ENCODE measurements at regions of chr1 and their contacts with region 1.

Region 1: GRCh38 chr1:107782217-107782845 is 182.6 kb downstream of the VAV3 start:
- DNase-seq: peak; percentile 75
- H3K4me3 ChIP-seq: no peak overlapping the region
- H3K27ac ChIP-seq: no peak overlapping the region
- H3K4me1 ChIP-seq: peaks cover 36% of the 10 kb centered on the region
- CTCF ChIP-seq: peak; percentile 98

Region 2: DNA sequence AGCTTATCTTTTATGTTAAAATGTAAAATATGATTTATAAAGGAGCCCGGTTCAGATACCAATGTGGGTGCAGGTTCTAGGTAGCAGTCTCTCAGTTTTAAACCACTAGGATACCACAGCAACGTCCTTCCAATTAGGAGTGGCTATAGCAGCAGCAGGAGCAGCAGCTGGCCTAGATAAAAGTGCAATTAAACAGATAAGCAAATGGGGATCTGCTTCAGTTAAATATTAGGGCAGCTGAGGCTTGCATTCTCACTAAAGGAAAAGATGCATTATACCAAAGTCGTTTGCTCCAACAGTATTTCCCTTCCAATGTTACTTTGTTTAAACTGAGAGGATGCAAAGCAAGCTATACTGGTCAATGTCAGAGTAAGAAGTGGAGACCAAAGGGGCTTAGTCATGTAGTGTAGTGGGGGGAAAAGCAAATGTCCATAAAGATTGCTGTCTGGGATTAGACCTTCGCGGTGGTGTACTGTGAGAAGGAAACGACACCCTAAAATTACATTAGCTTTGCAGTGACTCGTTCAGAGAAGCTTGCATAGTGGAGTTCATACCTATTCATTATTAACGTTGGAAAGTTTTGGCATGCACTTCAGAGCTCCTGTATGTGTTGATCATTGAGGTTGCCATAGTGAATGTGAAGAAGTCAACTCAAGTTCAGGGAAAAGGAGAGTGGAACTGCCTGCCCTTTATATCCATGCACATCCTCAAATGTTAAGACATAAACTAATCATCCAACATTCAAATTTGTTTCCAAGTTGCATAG is 89.6 kb before region 1 on chr1:
- CTCF ChIA-PET with region 1: no interaction called
- POLR2A ChIA-PET with region 1: no interaction called
- intact Hi-C with region 1: no loop called
- DNase-seq: no peak
- H3K4me3 ChIP-seq: no peak overlapping the region
- H3K27ac ChIP-seq: no peak overlapping the region
- H3K4me1 ChIP-seq: no peaks in the 10 kb centered on the region
- CTCF ChIP-seq: no peak

Region 3: DNA sequence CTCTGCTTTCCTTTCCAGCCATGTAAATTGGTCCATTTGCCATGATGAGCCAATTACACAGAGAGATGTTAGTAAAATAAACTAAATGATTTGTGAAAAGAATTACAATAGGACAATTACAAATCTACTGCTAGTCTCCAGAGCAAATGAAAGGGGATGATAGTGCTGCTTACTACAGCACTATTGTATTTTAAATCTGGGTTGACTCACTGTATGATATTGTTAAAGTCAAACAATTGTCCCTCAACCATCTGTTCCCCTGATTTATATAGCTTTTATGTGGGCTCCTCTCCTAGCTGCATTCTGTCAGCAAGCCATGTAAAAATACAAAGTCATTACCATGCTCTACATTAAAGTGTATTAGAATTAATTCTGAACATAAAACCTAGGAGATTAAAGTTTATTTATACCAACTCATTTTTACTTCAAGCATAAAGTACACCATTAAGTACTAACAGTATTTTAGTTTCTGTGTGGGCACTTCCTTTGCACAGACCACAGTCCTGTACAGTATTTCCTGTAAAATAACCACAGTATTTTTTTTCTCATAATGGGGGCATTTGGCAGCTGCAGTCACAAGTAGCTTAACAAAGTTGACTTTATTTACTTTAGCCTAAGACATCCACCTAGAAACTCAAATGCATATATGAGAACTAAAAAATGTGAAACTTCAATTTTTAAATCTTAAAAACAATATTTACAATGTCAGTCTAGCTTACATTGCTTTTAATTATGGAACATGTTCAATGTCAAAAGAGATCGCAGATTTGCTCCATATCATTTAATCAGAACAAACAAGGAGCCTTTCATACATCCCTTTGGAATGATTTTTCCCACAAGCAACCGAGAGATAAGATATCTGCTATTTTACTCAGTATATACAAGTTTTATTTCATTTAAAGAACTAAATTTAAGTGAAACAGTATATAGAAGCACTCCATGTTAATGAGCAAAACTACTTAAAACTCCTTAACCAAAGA is 47.0 kb after region 1 on chr1:
- CTCF ChIA-PET with region 1: no interaction called
- POLR2A ChIA-PET with region 1: no interaction called
- intact Hi-C with region 1: loop called (anchors 2 kb)
- DNase-seq: peak; percentile 73
- H3K4me3 ChIP-seq: peak overlapping the region; percentile 22
- H3K27ac ChIP-seq: peak overlapping the region; percentile 57
- H3K4me1 ChIP-seq: peaks cover 26% of the 10 kb centered on the region
- CTCF ChIP-seq: no peak

Region 4: DNA sequence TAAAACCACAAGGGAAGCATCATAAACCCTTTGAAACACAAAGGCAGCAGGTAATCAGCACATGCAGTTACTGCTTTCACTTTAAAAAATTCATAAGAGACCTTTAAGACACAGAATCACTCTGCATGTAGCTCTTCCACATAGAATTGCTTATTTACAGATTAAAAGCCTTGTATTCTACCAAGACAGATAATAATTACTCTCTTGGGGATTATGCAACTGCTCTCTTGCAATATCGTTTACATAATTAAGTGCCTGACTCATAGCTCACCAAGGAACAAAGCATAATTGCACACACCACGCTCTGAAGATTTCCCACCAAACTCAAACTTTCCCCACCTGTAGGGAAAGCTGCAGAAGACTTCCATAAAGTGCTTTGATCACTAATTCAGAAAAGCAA is 94.8 kb after region 1 on chr1:
- CTCF ChIA-PET with region 1: no interaction called
- POLR2A ChIA-PET with region 1: interaction called, 5 read pairs
- intact Hi-C with region 1: loop called (anchors 5 kb)
- DNase-seq: no peak
- H3K4me3 ChIP-seq: peak overlapping the region; percentile 38
- H3K27ac ChIP-seq: no peak overlapping the region
- H3K4me1 ChIP-seq: peaks cover 47% of the 10 kb centered on the region
- CTCF ChIP-seq: no peak

Region 5: DNA sequence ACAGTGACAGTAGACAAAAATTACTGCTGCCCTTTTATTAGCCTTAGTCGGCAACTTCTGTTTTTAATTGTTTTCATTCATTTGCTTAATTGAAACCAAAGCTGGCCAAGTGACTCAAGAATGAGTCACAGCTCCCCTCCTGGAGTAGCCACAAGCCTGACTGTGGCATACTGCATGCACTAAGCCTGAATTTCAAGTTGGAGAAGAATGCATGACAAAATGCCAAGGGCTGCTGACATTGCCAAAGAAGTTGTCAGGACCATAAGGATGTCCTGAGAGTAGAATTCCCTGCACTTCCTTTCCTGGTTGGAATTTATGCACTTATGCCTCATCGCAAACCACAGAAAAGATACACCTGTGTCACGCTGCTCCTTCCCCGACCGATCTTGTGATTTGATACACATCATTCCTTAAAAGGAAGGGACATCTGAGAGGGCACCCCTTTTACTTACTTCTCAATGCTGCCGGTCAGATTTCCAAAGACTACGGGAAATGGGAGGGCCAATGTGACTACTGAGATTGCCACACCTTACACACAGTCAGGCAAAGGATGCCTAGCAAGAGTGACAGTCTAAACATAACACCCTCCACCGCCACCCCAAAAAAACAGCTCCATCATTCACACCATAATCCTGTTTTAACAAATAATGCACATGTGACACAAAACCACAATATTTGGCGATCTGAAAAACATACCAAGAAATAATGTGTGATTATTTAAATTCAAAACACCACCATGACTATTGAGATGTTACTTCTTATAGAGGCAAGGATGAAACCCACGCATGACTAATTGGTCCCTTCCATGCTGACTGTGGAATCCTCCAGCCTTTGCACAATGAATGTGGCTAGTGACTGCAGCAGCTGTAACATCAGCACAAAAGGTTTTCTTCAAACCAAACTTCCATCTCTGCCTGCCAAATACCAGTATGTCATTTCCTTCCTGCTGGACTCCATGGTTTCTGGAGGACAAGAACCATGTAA is 154.5 kb after region 1 on chr1:
- CTCF ChIA-PET with region 1: no interaction called
- POLR2A ChIA-PET with region 1: no interaction called
- intact Hi-C with region 1: no loop called
- DNase-seq: peak; percentile 38
- H3K4me3 ChIP-seq: peak overlapping the region; percentile 5
- H3K27ac ChIP-seq: no peak overlapping the region
- H3K4me1 ChIP-seq: peaks cover 44% of the 10 kb centered on the region
- CTCF ChIP-seq: 0 out of 2 replicates have a peak, but pooled peaks have one; percentile 21

Region 6: DNA sequence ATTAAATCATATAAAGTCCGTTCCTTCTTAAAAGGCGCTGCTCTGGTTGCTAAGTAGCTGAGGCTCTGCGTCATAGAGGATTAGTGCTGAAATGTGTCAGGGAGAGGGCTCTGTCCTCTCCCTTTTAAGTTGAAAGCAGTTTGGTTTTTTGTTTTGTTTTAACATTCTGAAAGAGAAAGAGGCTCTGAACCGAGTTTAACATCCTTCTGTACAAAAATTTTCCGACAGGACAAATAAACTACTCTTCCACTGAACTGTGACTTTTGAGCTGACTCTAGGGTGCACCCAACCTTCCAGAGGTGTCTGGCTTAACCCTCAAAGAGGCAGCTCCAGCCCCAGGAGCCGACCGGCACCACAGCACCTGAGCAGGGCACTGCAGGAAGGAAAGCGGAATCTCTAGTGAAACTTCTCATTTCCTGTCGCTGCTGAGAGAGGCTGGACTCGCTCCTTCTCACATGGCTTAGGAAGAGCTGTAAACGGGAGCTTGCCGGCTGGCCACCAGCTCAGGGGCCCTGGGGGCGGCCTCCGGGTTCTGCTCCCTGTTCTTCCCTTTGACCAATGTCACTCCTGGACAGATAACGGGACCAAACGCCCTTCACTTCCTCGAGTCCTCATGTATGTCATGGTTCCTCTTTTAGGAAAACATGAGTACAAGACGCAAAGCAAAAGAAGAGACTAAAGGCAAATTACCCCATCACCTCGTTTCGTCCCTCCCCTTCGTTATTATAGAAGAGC is 181.4 kb after region 1 on chr1:
- CTCF ChIA-PET with region 1: interaction called, 3 read pairs
- POLR2A ChIA-PET with region 1: interaction called, 6 read pairs
- intact Hi-C with region 1: loop called (anchors 2 kb)
- DNase-seq: peak; percentile 70
- H3K4me3 ChIP-seq: peak overlapping the region; percentile 73
- H3K27ac ChIP-seq: peak overlapping the region; percentile 25
- H3K4me1 ChIP-seq: peaks cover 11% of the 10 kb centered on the region
- CTCF ChIP-seq: no peak

Region 7: GRCh38 chr1:108125312-108126138 is 343.2 kb after region 1 on chr1:
- CTCF ChIA-PET with region 1: interaction called, 17 read pairs
- POLR2A ChIA-PET with region 1: interaction called, 33 read pairs
- intact Hi-C with region 1: loop called (anchors 1 kb)
- DNase-seq: peak; percentile 77
- H3K4me3 ChIP-seq: no peak overlapping the region
- H3K27ac ChIP-seq: no peak overlapping the region
- H3K4me1 ChIP-seq: peaks cover 6% of the 10 kb centered on the region
- CTCF ChIP-seq: peak; percentile 91